CD4-positive, alpha-beta T cell (primary cell): ENCODE measurements at regions of chr9 and their contacts with region 1.

Region 1: GRCh38 chr9:35071814-35072460 is 488 bp downstream of the VCP start:
- DNase-seq: peak; percentile 42 to 87 (median 59)
- ATAC-seq: peak; percentile 45
- H3K4me3 ChIP-seq: peak overlapping the region; percentile 69
- H3K4me3 Mint-ChIP-seq: peak overlapping the region; percentile 85
- H3K27ac ChIP-seq: peak overlapping the region; percentile 92 to 96
- H3K27ac Mint-ChIP-seq: peak overlapping the region; percentile 87
- H3K4me1 ChIP-seq: peaks cover 42% of the 10 kb centered on the region
- H3K4me1 Mint-ChIP-seq: peaks cover 56% of the 10 kb centered on the region
- H3K27me3 ChIP-seq: no peaks in the 10 kb centered on the region
- H3K27me3 Mint-ChIP-seq: no peaks in the 10 kb centered on the region
- CTCF ChIP-seq: peak; percentile 35

Region 2: GRCh38 chr9:34989003-34989945 is 82.7 kb before region 1 on chr9 and contains the start of gene DNAJB5:
- CTCF ChIA-PET with region 1: no interaction called
- POLR2A ChIA-PET with region 1: interaction called, 8 read pairs
- intact Hi-C with region 1: loop called (anchors 2 to 5 kb)
- DNase-seq: peak; percentile 93 to 99 (median 95)
- ATAC-seq: peak; percentile 90
- H3K4me3 ChIP-seq: peak within 1 kb of the TSS; percentile 78
- H3K4me3 Mint-ChIP-seq: peak within 1 kb of the TSS; percentile 94
- H3K27ac ChIP-seq: peak within 1 kb of the TSS; percentile 62 to 63
- H3K27ac Mint-ChIP-seq: peak within 1 kb of the TSS; percentile 84
- H3K4me1 ChIP-seq: peaks cover 51% of the 10 kb centered on the region
- H3K4me1 Mint-ChIP-seq: peaks cover 51% of the 10 kb centered on the region
- H3K27me3 ChIP-seq: no peaks in the 10 kb centered on the region
- H3K27me3 Mint-ChIP-seq: no peaks in the 10 kb centered on the region
- CTCF ChIP-seq: no peak
- total RNA-seq, gene DNAJB5: 2.7 to 2.8 TPM

Region 3: GRCh38 chr9:35051069-35051967 is 20.6 kb before region 1 on chr9:
- CTCF ChIA-PET with region 1: interaction called, 10 read pairs
- POLR2A ChIA-PET with region 1: interaction called, 18 read pairs
- intact Hi-C with region 1: no loop called
- DNase-seq: peak; percentile 17 to 69 (median 44)
- ATAC-seq: peak; percentile 85
- H3K4me3 ChIP-seq: no peak overlapping the region
- H3K4me3 Mint-ChIP-seq: no peak overlapping the region
- H3K27ac ChIP-seq: no peak overlapping the region
- H3K27ac Mint-ChIP-seq: no peak overlapping the region
- H3K4me1 ChIP-seq: no peaks in the 10 kb centered on the region
- H3K4me1 Mint-ChIP-seq: peaks cover 5% of the 10 kb centered on the region
- H3K27me3 ChIP-seq: no peaks in the 10 kb centered on the region
- H3K27me3 Mint-ChIP-seq: no peaks in the 10 kb centered on the region
- CTCF ChIP-seq: peak; percentile 70

Region 4: DNA sequence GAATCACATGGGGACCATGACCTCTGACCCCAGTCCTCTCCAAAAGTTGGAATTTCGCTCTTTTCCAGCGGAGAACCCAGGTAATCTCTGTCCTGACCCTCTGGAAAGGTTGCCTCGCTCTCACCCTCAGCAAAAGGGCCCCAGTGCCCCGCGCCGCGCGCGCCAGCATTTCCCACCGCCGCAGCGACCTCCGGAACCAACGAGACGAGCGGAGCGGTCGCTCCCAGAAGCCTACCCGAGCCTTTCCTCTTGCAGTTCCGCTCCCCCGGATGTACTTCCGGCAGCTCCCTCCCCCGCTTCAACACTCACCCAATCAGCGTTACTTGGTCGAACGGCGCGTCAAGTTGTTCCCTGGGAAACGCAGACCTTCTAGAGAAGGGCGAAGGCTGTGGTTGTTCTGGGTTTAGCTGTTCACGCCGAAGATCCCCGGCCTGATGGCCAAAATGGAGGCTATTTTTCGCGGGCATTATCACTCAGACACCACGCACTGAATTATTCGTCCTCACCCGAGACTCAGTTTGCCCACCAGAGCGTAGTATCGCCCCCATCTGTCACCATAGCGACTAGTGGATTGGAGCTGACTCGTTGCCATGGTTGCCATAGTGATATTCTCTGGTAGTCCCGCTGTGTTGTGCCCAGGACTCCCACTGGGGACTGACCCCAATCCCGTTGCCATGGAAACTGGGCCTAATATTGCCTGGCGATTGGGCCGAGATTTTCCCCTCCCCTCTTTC is 31.2 kb after region 1 on chr9 and contains the start of gene STOML2:
- CTCF ChIA-PET with region 1: interaction called, 7 read pairs
- POLR2A ChIA-PET with region 1: interaction called, 50 read pairs
- intact Hi-C with region 1: no loop called
- DNase-seq: peak; percentile 84 to 97 (median 90)
- ATAC-seq: peak; percentile 98
- H3K4me3 ChIP-seq: peak within 1 kb of the TSS; percentile 99
- H3K4me3 Mint-ChIP-seq: peak within 1 kb of the TSS; percentile 92
- H3K27ac ChIP-seq: peak within 1 kb of the TSS; percentile 77 to 94
- H3K27ac Mint-ChIP-seq: peak within 1 kb of the TSS; percentile 89
- H3K4me1 ChIP-seq: peaks cover 28% of the 10 kb centered on the region
- H3K4me1 Mint-ChIP-seq: peaks cover 36% of the 10 kb centered on the region
- H3K27me3 ChIP-seq: no peaks in the 10 kb centered on the region
- H3K27me3 Mint-ChIP-seq: no peaks in the 10 kb centered on the region
- CTCF ChIP-seq: no peak
- total RNA-seq, gene STOML2: 29.8 to 30.5 TPM

Region 5: GRCh38 chr9:35287986-35288632 is 216.2 kb after region 1 on chr9:
- CTCF ChIA-PET with region 1: no interaction called
- POLR2A ChIA-PET with region 1: no interaction called
- intact Hi-C with region 1: no loop called
- DNase-seq: no peak
- ATAC-seq: no peak
- H3K4me3 ChIP-seq: no peak overlapping the region
- H3K4me3 Mint-ChIP-seq: no peak overlapping the region
- H3K27ac ChIP-seq: no peak overlapping the region
- H3K27ac Mint-ChIP-seq: no peak overlapping the region
- H3K4me1 ChIP-seq: no peaks in the 10 kb centered on the region
- H3K4me1 Mint-ChIP-seq: no peaks in the 10 kb centered on the region
- H3K27me3 ChIP-seq: peaks cover 0 to 5% of the 10 kb centered on the region in 2 experiments
- H3K27me3 Mint-ChIP-seq: peaks cover 26% of the 10 kb centered on the region
- CTCF ChIP-seq: no peak